ENCODE measurements at regions of chr2 and their contacts with region 1.

Region 1: DNA sequence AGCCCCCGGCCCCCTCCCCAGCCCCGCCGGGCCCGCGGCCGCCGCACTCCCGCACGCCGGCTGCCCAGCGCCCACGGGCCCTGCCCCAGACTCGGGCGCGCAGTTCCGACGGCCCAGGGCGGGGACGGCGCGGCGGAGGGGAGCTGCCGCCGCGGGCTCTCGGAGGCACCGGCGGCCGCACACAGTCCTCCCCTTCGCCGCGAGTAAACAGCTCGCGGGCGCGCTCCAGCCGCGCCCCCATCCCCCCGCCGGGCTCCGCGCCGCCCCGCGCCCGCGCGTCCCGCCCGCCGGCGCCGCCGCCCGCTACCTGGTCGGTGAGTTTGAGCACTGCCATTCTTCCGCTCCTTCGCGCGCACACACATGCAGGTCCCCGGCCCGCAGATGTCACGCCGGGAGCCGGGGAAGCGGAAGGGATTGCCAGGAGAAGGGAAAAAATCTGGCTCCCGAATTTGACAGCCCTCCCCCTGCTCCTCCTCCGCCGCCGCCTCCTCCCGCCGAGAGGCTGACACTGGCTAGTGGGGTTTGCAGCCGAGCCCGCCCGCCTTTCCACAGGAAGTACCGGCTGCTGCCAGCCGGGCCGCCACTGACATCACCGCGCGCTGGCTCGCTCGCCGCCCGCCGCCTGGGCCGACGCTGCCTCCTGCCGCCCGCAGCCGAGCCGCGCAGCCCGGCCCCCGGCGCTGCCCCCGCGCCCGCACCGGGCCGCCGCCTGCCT is at the start of gene ANKRD44:
- DNase-seq: peak; percentile 93
- ATAC-seq: peak; percentile 72
- H3K4me3 Mint-ChIP-seq: peak within 1 kb of the TSS; percentile 94
- H3K27ac Mint-ChIP-seq: peak within 1 kb of the TSS; percentile 93
- H3K4me1 Mint-ChIP-seq: peaks cover 56% of the 10 kb centered on the region
- H3K27me3 Mint-ChIP-seq: no peaks in the 10 kb centered on the region
- total RNA-seq, gene ANKRD44: 210 to 249 TPM

Region 2: DNA sequence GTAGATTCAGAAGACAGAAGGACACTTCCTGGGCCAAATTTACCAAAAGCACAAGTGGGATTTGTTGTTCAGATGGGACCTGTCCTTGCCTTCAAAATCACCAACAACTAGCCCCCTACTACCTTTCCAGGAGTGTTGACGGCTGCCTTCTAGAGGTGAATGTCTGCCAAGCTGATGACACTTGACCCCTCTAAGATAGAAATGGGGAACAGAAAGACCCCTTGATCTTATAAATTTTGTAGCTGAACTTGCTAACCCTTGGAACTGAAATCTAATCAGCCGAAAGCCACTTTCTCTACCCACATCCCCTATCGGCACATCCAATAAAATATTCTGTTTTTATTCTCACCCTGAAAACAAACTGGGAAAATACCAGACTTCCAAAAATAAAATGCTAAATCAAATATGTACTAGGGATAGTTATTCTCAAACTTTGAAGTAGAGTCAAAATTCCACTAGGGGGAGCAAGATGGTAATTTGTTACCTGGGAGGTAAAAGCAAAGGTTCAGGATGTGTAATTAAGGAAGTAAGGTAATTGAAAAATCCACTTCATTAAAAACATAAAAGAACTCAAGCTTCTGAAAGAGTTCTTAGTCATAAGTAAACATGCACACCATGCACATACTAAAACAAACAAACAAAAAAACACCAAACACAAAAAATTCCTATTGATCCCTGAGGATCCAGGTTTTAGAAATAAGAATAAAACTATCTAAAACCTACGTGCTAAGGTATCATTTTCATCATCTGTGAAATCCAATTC is 119.1 kb before region 1 on chr2:
- CTCF ChIA-PET with region 1: interaction called, 49 read pairs
- DNase-seq: no peak
- ATAC-seq: peak; percentile 35
- H3K4me3 Mint-ChIP-seq: peak overlapping the region; percentile 44
- H3K27ac Mint-ChIP-seq: peak overlapping the region; percentile 78
- H3K4me1 Mint-ChIP-seq: peaks cover 73% of the 10 kb centered on the region
- H3K27me3 Mint-ChIP-seq: no peaks in the 10 kb centered on the region

Region 3: GRCh38 chr2:197198890-197199289 is 111.5 kb before region 1 on chr2:
- CTCF ChIA-PET with region 1: interaction called, 18 read pairs
- DNase-seq: peak; percentile 98
- ATAC-seq: peak; percentile 85
- H3K4me3 Mint-ChIP-seq: peak overlapping the region; percentile 72
- H3K27ac Mint-ChIP-seq: peak overlapping the region; percentile 86
- H3K4me1 Mint-ChIP-seq: peaks cover 89% of the 10 kb centered on the region
- H3K27me3 Mint-ChIP-seq: no peaks in the 10 kb centered on the region

Region 4: DNA sequence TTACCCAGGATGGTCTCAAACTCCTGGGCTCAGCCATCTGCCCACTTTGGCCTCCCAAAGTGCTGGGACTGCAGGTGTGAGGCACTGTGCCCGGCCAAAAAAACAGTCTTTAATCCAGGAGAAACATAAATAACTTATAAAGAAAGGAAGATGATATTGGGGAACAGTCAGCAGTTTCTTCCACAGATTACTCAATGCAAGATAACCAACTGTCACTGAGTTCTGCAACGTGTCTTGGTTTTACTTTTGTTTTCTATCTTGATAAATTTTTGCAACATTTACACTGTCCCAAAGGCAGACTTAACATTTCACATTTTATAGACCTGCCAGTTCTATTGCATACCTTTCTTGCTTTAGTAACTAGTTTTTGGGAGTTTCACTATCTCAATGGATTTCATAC is 71.0 kb before region 1 on chr2:
- CTCF ChIA-PET with region 1: interaction called, 14 read pairs
- DNase-seq: no peak
- ATAC-seq: peak; percentile 64
- H3K4me3 Mint-ChIP-seq: peak overlapping the region; percentile 77
- H3K27ac Mint-ChIP-seq: peak overlapping the region; percentile 93
- H3K4me1 Mint-ChIP-seq: peaks cover 86% of the 10 kb centered on the region
- H3K27me3 Mint-ChIP-seq: no peaks in the 10 kb centered on the region

Region 5: GRCh38 chr2:197255543-197255942 is 54.9 kb before region 1 on chr2:
- CTCF ChIA-PET with region 1: interaction called, 17 read pairs
- DNase-seq: peak; percentile 90
- ATAC-seq: peak; percentile 92
- H3K4me3 Mint-ChIP-seq: peak overlapping the region; percentile 73
- H3K27ac Mint-ChIP-seq: peak overlapping the region; percentile 93
- H3K4me1 Mint-ChIP-seq: peaks cover 71% of the 10 kb centered on the region
- H3K27me3 Mint-ChIP-seq: no peaks in the 10 kb centered on the region

Region 6: GRCh38 chr2:197293252-197294007 is 17.0 kb before region 1 on chr2:
- CTCF ChIA-PET with region 1: interaction called, 68 read pairs
- DNase-seq: peak; percentile 58
- ATAC-seq: peak; percentile 62
- H3K4me3 Mint-ChIP-seq: peak overlapping the region; percentile 73
- H3K27ac Mint-ChIP-seq: peak overlapping the region; percentile 90
- H3K4me1 Mint-ChIP-seq: peaks cover 91% of the 10 kb centered on the region
- H3K27me3 Mint-ChIP-seq: no peaks in the 10 kb centered on the region